ENCODE measurements at regions of chr11 and their contacts with region 1.

Region 1: DNA sequence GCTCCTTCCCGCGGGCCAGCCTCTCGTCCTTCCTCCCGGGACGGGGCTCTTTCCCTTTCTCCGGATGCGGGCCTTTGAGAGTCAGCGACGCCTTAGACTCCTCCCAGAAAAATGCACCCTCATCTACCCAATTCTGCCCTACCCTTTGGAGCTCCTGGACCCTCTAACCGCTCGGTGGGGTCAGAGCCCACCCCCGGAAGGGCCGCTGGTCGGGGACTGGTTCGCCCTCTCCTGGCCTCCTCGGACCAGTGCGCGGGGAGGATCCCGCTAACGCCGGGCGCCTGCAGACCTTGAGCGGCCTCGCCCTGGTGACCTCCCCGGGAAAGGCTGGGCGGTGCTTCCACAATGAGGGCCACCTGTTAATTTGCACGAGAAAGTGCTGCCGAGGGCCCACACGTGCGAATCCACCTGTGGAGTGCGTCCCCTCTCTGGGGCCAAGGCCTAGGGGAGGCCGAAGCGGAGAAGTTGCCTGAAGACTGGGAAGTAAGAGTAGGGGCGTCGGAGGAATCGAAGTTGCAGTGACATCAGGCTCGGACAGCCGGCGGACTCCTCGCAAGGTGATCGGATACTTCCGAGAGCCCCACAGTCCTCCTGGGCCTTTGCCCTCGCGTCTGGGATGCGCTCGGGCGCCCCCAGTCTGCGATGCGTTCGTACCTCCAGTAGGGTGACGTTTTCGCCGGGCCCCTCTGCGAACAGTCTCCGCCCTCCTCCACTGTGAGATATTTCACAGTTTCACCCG is 61.5 kb downstream of the ENDOD1 start:
- DNase-seq: peak; percentile 96
- ATAC-seq: peak; percentile 95
- H3K4me3 Mint-ChIP-seq: peak overlapping the region; percentile 87
- H3K27ac Mint-ChIP-seq: peak overlapping the region; percentile 85
- H3K4me1 Mint-ChIP-seq: peaks cover 34% of the 10 kb centered on the region
- H3K27me3 Mint-ChIP-seq: peaks cover 5% of the 10 kb centered on the region
- CTCF ChIP-seq: no peak

Region 2: DNA sequence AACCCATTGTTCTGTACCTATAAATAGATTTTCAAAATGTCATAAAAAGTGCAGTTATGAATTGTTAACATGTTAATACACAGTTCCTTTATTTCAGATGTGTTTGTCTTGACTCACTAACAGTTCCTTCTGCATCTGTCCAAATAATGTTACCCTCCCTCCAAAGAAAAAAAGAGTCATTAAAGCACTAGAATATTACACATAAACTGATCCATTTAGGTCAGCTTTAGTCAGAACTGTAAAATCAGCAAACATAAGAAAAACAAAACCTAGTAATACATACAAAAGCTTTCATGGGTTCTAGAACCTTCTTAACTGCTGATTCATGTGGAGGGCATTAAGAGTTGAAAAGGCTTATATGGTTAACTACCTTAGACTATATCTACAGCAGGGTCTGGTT is 14.5 kb after region 1 on chr11:
- CTCF ChIA-PET with region 1: interaction called, 53 read pairs
- POLR2A ChIA-PET with region 1: no interaction called
- intact Hi-C with region 1: no loop called
- DNase-seq: no peak
- ATAC-seq: no peak
- H3K4me3 Mint-ChIP-seq: no peak overlapping the region
- H3K27ac Mint-ChIP-seq: peak overlapping the region; percentile 25
- H3K4me1 Mint-ChIP-seq: peaks cover 17% of the 10 kb centered on the region
- H3K27me3 Mint-ChIP-seq: no peaks in the 10 kb centered on the region
- CTCF ChIP-seq: no peak

Region 3: GRCh38 chr11:95212609-95213008 is 61.5 kb after region 1 on chr11:
- CTCF ChIA-PET with region 1: interaction called, 13 read pairs
- POLR2A ChIA-PET with region 1: no interaction called
- intact Hi-C with region 1: no loop called
- DNase-seq: no peak
- ATAC-seq: no peak
- H3K4me3 Mint-ChIP-seq: no peak overlapping the region
- H3K27ac Mint-ChIP-seq: no peak overlapping the region
- H3K4me1 Mint-ChIP-seq: peaks cover 13% of the 10 kb centered on the region
- H3K27me3 Mint-ChIP-seq: no peaks in the 10 kb centered on the region
- CTCF ChIP-seq: no peak

Region 4: DNA sequence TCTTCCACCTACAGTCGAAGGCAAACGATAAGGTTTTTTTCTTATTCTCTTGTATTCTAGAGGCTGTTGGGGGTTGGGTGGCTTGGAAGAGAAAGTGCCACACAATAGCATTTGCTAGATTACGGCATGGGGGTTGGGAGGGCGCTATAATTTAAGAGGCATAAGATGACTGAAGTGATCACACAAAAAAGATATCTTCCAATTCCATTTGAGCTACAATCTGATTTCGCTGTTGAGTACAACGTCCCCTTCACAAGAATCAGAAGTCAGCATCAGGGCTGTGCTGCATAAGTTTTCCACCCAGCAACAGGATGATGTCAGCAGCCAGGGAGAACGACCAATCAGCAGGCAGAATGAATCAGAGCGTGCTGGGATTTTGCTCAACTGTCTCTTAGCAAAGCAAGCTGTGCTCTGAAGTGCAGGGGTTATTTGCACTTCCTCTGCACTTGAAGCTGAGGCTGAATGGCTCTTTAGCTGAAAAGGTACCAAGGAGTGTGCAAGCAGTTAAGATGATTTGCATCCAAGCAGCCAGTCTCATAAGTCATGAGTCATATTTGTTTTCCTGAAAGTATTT is 103.1 kb after region 1 on chr11:
- CTCF ChIA-PET with region 1: interaction called, 14 read pairs
- POLR2A ChIA-PET with region 1: interaction called, 4 read pairs
- intact Hi-C with region 1: no loop called
- DNase-seq: peak; percentile 91
- ATAC-seq: peak; percentile 100
- H3K4me3 Mint-ChIP-seq: peak overlapping the region; percentile 79
- H3K27ac Mint-ChIP-seq: peak overlapping the region; percentile 91
- H3K4me1 Mint-ChIP-seq: peaks cover 47% of the 10 kb centered on the region
- H3K27me3 Mint-ChIP-seq: no peaks in the 10 kb centered on the region
- CTCF ChIP-seq: no peak

Region 5: DNA sequence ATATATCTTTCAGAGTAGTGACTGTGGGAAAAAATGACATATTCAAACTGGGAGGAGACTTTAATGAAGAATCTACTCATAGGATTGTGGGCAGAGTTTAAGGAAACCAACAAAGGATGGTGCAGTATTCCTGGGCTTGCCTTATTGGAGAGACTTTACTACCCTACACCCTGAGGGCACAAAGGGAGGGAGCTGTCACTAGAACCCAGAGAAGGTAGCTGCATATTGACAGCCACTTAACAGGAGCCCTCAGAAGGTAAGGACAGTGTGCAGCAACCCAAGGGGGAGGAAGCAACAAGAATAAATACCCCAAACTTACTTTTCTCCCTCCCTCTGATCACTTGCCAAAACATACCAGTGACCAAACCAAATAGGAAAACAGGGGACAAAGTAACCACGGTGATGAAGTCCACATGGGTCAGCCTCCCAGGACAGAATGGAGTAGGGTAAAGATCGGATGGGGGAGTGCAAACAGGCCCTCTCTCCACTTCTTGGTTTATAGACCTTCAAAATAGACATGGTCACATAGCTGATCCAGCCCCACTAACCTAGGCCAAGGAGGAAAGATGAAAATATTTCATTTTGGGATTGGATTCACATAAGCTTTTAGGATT is 201.7 kb after region 1 on chr11:
- CTCF ChIA-PET with region 1: no interaction called
- POLR2A ChIA-PET with region 1: no interaction called
- intact Hi-C with region 1: no loop called
- DNase-seq: no peak
- ATAC-seq: no peak
- H3K4me3 Mint-ChIP-seq: no peak overlapping the region
- H3K27ac Mint-ChIP-seq: no peak overlapping the region
- H3K4me1 Mint-ChIP-seq: no peaks in the 10 kb centered on the region
- H3K27me3 Mint-ChIP-seq: no peaks in the 10 kb centered on the region
- CTCF ChIP-seq: no peak

Region 6: GRCh38 chr11:95790123-95790932 is 639.2 kb after region 1 on chr11 and contains the start of gene CEP57:
- CTCF ChIA-PET with region 1: interaction called, 17 read pairs
- POLR2A ChIA-PET with region 1: interaction called, 7 read pairs
- intact Hi-C with region 1: no loop called
- DNase-seq: peak; percentile 98
- ATAC-seq: peak; percentile 60
- H3K4me3 Mint-ChIP-seq: peak within 1 kb of the TSS; percentile 98
- H3K27ac Mint-ChIP-seq: peak within 1 kb of the TSS; percentile 100
- H3K4me1 Mint-ChIP-seq: peaks cover 52% of the 10 kb centered on the region
- H3K27me3 Mint-ChIP-seq: no peaks in the 10 kb centered on the region
- CTCF ChIP-seq: no peak
- total RNA-seq, gene CEP57: 123 to 124 TPM

Measured in activated CD8-positive, alpha-beta T cell treated with anti-CD3 and anti-CD28 coated beads for 36 hours (primary cell).